Colonic mucosa (tissue), 4 donors: ENCODE measurements at regions of chr22 and their contacts with region 1.

Region 1: GRCh38 chr22:46367707-46368191 is 32.2 kb downstream of the TRMU start:
- DNase-seq: peak; percentile 83
- H3K4me3 ChIP-seq: no peak overlapping the region
- H3K27ac ChIP-seq: no peak overlapping the region
- H3K4me1 ChIP-seq: peaks cover 3% of the 10 kb centered on the region
- H3K27me3 ChIP-seq: no peaks in the 10 kb centered on the region
- CTCF ChIP-seq: peak; percentile 84

Region 2: DNA sequence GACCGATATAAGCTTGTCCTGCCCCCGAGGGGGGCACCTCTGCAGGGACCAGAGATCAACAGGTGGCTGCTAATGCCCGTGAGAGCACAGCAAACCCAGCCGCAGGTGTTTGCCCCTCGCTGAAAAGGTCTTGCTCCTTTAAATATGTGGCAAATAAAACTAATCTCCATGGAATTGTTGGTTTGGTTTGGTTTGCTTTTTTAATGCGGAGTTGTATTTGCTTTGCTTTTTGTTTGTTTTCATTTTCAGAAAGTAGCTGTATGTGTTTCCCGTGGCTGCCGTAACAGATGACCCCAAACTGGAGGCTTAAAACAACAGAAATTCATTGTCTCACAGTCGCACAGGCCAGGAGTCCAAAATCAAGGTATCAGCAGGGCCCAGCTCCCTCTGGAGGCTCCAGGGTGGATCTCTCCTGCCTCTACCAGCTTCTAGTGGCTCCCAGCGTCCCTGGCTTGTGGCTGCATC is 76.7 kb after region 1 on chr22:
- intact Hi-C with region 1: loop called (anchors 10 kb)
- DNase-seq: peak; percentile 44
- H3K4me3 ChIP-seq: no peak overlapping the region
- H3K27ac ChIP-seq: peak overlapping the region; percentile 9
- H3K4me1 ChIP-seq: no peaks in the 10 kb centered on the region
- H3K27me3 ChIP-seq: no peaks in the 10 kb centered on the region
- CTCF ChIP-seq: no peak

Region 3: GRCh38 chr22:46514592-46515207 is 147.0 kb after region 1 on chr22:
- intact Hi-C with region 1: no loop called
- DNase-seq: no peak
- H3K4me3 ChIP-seq: no peak overlapping the region
- H3K27ac ChIP-seq: no peak overlapping the region
- H3K4me1 ChIP-seq: no peaks in the 10 kb centered on the region
- H3K27me3 ChIP-seq: no peaks in the 10 kb centered on the region
- CTCF ChIP-seq: no peak

Region 4: DNA sequence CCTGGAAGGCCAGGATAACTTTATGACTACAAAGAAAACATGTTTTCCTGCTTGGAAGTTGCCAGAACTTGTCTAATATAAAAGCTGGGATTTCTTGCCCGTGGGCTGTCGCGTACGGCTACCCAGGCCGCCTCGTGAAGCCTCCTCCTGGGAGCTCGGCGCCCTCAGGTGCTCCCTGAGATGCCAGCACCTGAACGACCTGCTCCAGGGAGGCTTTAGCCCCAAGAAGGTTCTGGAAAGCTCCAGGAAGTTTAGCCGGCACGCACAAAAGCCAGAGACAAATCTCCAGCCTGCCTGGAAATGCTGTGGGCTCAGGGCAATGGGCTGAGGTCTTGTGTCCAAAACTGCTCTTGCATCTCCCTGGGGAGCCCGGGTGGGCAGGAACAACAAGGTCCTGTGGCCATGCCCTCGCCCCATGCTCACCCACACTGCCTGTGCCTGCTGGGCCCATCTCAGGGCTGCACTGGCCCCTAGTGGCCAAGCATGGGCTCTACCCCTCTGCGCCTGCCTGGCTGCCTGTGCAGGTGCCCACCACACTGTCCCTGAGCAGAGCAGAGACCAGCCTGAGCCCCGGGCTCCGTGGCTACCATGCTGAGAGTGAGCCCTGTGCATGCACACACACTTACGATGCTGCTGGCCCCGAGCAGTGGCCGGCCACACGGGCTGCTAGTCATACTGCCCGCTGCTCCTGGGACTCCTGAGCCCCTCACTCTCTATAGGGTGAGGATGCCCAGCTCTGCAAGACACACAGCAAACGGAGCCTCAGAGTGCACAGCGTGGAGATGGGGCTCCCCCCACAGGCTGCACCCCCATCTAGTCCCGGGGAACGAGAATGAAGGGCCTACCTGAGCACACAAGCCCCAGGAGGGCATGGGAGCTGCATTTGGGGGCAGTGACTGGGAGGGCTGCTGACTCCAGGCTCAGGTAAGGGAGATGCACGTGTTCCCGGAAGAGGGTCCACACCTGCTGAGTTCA is 174.5 kb after region 1 on chr22:
- intact Hi-C with region 1: loop called (anchors 1 kb)
- DNase-seq: peak; percentile 78
- H3K4me3 ChIP-seq: no peak overlapping the region
- H3K27ac ChIP-seq: no peak overlapping the region
- H3K4me1 ChIP-seq: peaks cover 12% of the 10 kb centered on the region
- H3K27me3 ChIP-seq: peaks cover 18% of the 10 kb centered on the region
- CTCF ChIP-seq: peak; percentile 97

Region 5: GRCh38 chr22:46649141-46650077 is 281.7 kb after region 1 on chr22:
- intact Hi-C with region 1: no loop called
- DNase-seq: no peak
- H3K4me3 ChIP-seq: no peak overlapping the region
- H3K27ac ChIP-seq: peak overlapping the region; percentile 0
- H3K4me1 ChIP-seq: peaks cover 24% of the 10 kb centered on the region
- H3K27me3 ChIP-seq: no peaks in the 10 kb centered on the region
- CTCF ChIP-seq: no peak